PC-9 (cell line): ENCODE measurements at regions of chr20 and their contacts with region 1.

Region 1: DNA sequence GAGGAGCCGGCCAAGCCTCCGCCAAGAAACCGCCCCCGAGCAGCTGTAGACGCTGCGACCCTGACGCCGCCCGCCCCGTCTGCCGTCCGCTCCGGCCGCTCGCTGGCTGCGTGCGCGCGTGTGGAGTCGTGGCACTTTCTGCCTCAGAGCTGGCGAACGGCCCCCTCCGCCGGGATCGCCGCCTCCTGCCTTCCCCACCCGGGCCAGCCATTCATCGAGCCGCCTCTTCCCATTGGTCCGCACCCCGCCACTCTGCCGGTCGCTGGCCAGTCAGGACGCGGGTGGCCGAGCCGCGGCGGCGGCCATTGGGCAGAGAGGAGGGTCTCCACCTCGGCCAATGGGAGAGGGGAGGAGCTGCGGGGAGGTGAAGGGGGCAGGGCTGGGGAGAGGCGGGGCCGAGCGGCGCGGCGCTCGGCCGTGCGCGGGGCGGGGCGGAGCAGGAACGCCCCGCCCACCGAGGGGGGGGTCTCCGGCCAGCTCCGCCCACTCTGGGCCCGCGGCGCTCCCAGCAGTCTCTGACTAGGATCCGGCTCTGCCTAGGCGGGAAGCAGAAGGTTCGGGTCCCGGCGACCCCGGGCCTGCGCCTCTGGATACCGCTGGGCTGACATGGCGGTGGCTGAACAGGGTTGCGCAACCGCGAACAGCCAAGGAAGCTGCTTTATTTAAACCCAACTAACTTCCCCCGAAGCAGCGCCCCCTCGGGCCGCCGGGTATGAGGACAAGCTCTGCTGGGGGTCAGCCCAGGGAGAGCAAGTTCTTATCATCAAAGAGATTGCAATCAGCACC is at the start of gene RRBP1:
- DNase-seq: peak; percentile 85 to 99
- H3K4me3 ChIP-seq: peak within 1 kb of the TSS; percentile 66
- H3K27ac ChIP-seq: peak within 1 kb of the TSS; percentile 37; the same call in 1 of the 2 replicates
- H3K4me1 ChIP-seq: peaks cover 24% of the 10 kb centered on the region
- H3K27me3 ChIP-seq: peaks cover 41% of the 10 kb centered on the region
- CTCF ChIP-seq: peak; percentile 86
- total RNA-seq, gene RRBP1: 144 and 156 TPM in 2 replicates

Region 2: DNA sequence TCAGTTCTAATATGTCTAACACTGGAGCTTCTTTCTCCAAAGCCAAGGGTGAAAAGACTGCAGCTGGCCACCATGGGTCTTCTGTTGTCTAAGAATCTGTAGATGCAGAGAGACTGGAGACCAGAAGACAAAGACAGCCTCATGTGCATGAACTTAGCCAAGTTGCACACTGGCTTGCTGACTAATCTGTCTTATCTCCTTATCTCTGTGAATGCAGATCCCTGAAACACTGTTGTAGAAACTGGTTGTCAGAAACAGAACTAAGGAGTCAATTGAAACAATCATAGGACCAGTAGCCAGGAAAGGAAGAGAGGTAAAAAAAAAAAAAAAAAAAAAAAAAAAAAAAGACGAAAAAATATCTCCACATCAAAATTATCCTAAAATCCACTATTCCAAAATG is 260.8 kb before region 1 on chr20:
- CTCF ChIA-PET with region 1: no interaction called
- POLR2A ChIA-PET with region 1: no interaction called
- intact Hi-C with region 1: no loop called
- DNase-seq: peak in 1 of 2 experiments; percentile 40
- H3K4me3 ChIP-seq: no peak overlapping the region
- H3K27ac ChIP-seq: no peak overlapping the region
- H3K4me1 ChIP-seq: no peaks in the 10 kb centered on the region
- H3K27me3 ChIP-seq: peaks cover 49% of the 10 kb centered on the region
- CTCF ChIP-seq: no peak

Region 3: GRCh38 chr20:17569616-17570346 is 112.5 kb before region 1 on chr20 and contains the start of gene DSTN:
- CTCF ChIA-PET with region 1: no interaction called
- POLR2A ChIA-PET with region 1: interaction called, 7 read pairs
- intact Hi-C with region 1: loop called (anchors 1 kb)
- DNase-seq: peak; percentile 91 to 97
- H3K4me3 ChIP-seq: peak within 1 kb of the TSS; percentile 95
- H3K27ac ChIP-seq: peak within 1 kb of the TSS; percentile 84
- H3K4me1 ChIP-seq: peaks cover 54% of the 10 kb centered on the region
- H3K27me3 ChIP-seq: no peaks in the 10 kb centered on the region
- CTCF ChIP-seq: no peak
- total RNA-seq, gene DSTN: 296 and 366 TPM in 2 replicates

Region 4: GRCh38 chr20:17854307-17854903 is 172.1 kb after region 1 on chr20:
- CTCF ChIA-PET with region 1: interaction called, 5 read pairs
- POLR2A ChIA-PET with region 1: interaction called, 3 read pairs
- intact Hi-C with region 1: loop called (anchors 1 kb)
- DNase-seq: peak in 1 of 2 experiments; percentile 25
- H3K4me3 ChIP-seq: no peak overlapping the region
- H3K27ac ChIP-seq: no peak overlapping the region
- H3K4me1 ChIP-seq: peaks cover 14% of the 10 kb centered on the region; the same call in 1 of the 2 replicates
- H3K27me3 ChIP-seq: no peaks in the 10 kb centered on the region
- CTCF ChIP-seq: no peak

Region 5: GRCh38 chr20:17898548-17898994 is 216.3 kb after region 1 on chr20:
- CTCF ChIA-PET with region 1: interaction called, 6 read pairs
- POLR2A ChIA-PET with region 1: interaction called, 5 read pairs
- intact Hi-C with region 1: loop called (anchors 1 kb)
- DNase-seq: peak; percentile 33 to 65
- H3K4me3 ChIP-seq: no peak overlapping the region
- H3K27ac ChIP-seq: no peak overlapping the region
- H3K4me1 ChIP-seq: no peaks in the 10 kb centered on the region
- H3K27me3 ChIP-seq: no peaks in the 10 kb centered on the region
- CTCF ChIP-seq: peak; percentile 96